MCF 10A (cell line): ENCODE measurements at regions of chr5 and their contacts with region 1.

Region 1: GRCh38 chr5:108748401-108749127 is 867 bp downstream of the FER start:
- DNase-seq: peak; percentile 98
- H3K4me3 Mint-ChIP-seq: peak overlapping the region; percentile 87
- H3K27ac Mint-ChIP-seq: peak overlapping the region; percentile 99
- H3K4me1 Mint-ChIP-seq: peaks cover 6% of the 10 kb centered on the region
- H3K27me3 Mint-ChIP-seq: no peaks in the 10 kb centered on the region
- CTCF ChIP-seq: no peak

Region 2: GRCh38 chr5:108521841-108522506 is 226.6 kb before region 1 on chr5:
- CTCF ChIA-PET with region 1: no interaction called
- POLR2A ChIA-PET with region 1: no interaction called
- intact Hi-C with region 1: loop called (anchors 2 kb)
- DNase-seq: peak; percentile 74
- H3K4me3 Mint-ChIP-seq: no peak overlapping the region
- H3K27ac Mint-ChIP-seq: no peak overlapping the region
- H3K4me1 Mint-ChIP-seq: no peaks in the 10 kb centered on the region
- H3K27me3 Mint-ChIP-seq: peaks cover 34% of the 10 kb centered on the region
- CTCF ChIP-seq: peak; percentile 56

Region 3: GRCh38 chr5:108681079-108681921 is 67.3 kb before region 1 on chr5:
- CTCF ChIA-PET with region 1: interaction called, 6 read pairs
- POLR2A ChIA-PET with region 1: interaction called, 7 read pairs
- intact Hi-C with region 1: loop called (anchors 2 kb)
- DNase-seq: peak; percentile 73
- H3K4me3 Mint-ChIP-seq: no peak overlapping the region
- H3K27ac Mint-ChIP-seq: no peak overlapping the region
- H3K4me1 Mint-ChIP-seq: no peaks in the 10 kb centered on the region
- H3K27me3 Mint-ChIP-seq: peaks cover 16% of the 10 kb centered on the region
- CTCF ChIP-seq: peak; percentile 69

Region 4: GRCh38 chr5:108867656-108868055 is 119.1 kb after region 1 on chr5:
- CTCF ChIA-PET with region 1: no interaction called
- POLR2A ChIA-PET with region 1: interaction called, 14 read pairs
- intact Hi-C with region 1: loop called (anchors 10 kb)
- DNase-seq: no peak
- H3K4me3 Mint-ChIP-seq: no peak overlapping the region
- H3K27ac Mint-ChIP-seq: no peak overlapping the region
- H3K4me1 Mint-ChIP-seq: peaks cover under 1% of the 10 kb centered on the region
- H3K27me3 Mint-ChIP-seq: no peaks in the 10 kb centered on the region
- CTCF ChIP-seq: no peak

Region 5: GRCh38 chr5:108919591-108920326 is 171.2 kb after region 1 on chr5:
- CTCF ChIA-PET with region 1: interaction called, 4 read pairs
- POLR2A ChIA-PET with region 1: no interaction called
- intact Hi-C with region 1: loop called (anchors 5 kb)
- DNase-seq: no peak
- H3K4me3 Mint-ChIP-seq: no peak overlapping the region
- H3K27ac Mint-ChIP-seq: no peak overlapping the region
- H3K4me1 Mint-ChIP-seq: no peaks in the 10 kb centered on the region
- H3K27me3 Mint-ChIP-seq: no peaks in the 10 kb centered on the region
- CTCF ChIP-seq: peak; percentile 32

Region 6: DNA sequence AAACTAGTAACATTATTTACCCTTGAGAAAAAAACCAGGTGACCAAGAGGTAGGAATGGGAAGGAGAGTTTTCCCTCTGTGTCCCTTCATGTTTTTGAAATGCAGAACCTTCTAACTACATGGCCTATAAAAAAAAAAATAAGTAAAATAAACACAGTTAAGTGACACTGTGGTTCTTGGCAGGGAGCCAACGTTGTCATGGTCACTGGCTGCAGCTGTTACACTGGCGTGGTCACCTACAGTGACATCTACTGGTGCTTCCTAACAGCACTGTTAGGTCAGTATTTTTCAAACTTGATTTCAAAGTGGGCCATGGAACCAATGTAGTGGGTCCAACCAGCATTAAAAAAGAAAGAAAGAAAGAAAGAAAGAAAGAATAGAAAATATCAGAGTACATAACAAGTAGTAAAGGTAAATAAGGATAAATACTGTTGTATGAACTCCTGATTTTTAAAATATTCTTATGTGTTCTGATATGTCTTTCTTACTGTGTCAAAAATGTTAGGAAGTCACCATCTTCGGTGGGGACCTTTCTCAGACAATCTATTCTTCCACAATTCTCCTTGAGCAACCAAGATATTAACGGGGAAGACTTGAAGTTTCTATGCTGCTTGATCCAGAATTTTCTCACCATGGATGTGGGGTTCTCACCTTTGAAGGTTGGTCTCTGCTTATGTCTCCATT is 720.3 kb after region 1 on chr5:
- CTCF ChIA-PET with region 1: no interaction called
- POLR2A ChIA-PET with region 1: no interaction called
- intact Hi-C with region 1: loop called (anchors 5 kb)
- DNase-seq: peak; percentile 96
- H3K4me3 Mint-ChIP-seq: no peak overlapping the region
- H3K27ac Mint-ChIP-seq: peak overlapping the region; percentile 24
- H3K4me1 Mint-ChIP-seq: peaks cover 6% of the 10 kb centered on the region
- H3K27me3 Mint-ChIP-seq: no peaks in the 10 kb centered on the region
- CTCF ChIP-seq: peak; percentile 63